Caco-2 (cell line): ENCODE measurements at regions of chr1 and their contacts with region 1.

Region 1: DNA sequence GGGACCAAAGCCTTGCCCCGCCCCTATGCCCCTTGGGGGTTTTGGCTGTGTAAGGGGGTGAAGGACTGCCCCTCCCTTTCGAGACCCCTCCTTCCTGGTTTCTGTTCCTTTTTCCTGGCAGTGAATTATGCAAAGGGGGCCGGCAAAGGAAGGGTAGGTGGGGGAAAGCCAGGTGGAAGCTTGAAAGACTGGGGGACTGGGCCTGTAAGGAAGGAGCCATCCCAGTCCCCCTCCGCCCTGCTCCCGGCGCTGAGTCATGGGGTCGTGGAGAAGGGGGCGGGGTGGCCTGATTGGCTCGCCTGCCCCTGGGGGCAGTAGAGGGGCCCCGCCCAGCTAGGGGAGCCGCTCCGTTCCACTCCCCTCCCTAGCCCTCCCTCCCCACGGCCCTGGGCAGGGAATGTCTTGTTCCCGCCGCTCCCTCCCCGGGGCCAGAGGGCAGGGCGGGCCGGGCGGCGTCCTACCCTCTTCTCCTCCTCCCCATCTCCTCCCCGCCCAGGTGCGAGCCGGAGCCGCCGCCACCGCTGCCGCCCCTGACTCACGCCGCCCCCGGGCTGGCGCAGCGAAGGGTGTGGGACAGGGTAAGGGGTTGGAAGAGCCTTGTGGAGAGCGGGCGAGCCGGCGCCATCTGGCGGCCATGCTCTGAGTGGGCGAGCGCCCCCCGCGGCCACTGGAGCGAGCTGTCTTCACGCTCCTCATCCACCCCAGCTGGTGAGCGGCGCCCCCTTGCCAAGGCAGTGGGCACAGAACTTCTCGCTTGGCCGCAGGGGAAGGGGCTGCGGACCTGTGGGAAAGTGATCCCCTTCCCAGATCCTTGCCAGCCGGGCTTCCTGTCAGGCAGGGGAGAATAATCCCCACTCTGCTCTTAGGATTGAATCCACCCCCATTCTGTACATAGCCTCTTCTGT is 14.7 kb downstream of the ZBTB7B start:
- DNase-seq: peak; percentile 97 to 98
- H3K4me3 ChIP-seq: peak overlapping the region; percentile 6; the same call in 1 of the 2 replicates
- H3K4me3 Mint-ChIP-seq: peak overlapping the region; percentile 56
- H3K27ac Mint-ChIP-seq: peak overlapping the region; percentile 76
- H3K4me1 ChIP-seq: peaks cover 20% of the 10 kb centered on the region
- H3K4me1 Mint-ChIP-seq: peaks cover 38% of the 10 kb centered on the region
- H3K27me3 ChIP-seq: no peaks in the 10 kb centered on the region
- H3K27me3 Mint-ChIP-seq: no peaks in the 10 kb centered on the region
- CTCF ChIP-seq: peak; percentile 99 to 100

Region 2: GRCh38 chr1:154961497-154962262 is 55.6 kb before region 1 on chr1 and contains the start of gene PYGO2:
- CTCF ChIA-PET with region 1: interaction called, 11 read pairs
- POLR2A ChIA-PET with region 1: no interaction called
- intact Hi-C with region 1: no loop called
- DNase-seq: peak; percentile 80 to 90
- H3K4me3 ChIP-seq: peak within 1 kb of the TSS; percentile 95
- H3K4me3 Mint-ChIP-seq: peak within 1 kb of the TSS; percentile 88
- H3K27ac Mint-ChIP-seq: peak within 1 kb of the TSS; percentile 81
- H3K4me1 ChIP-seq: peaks cover 12% of the 10 kb centered on the region
- H3K4me1 Mint-ChIP-seq: peaks cover 16% of the 10 kb centered on the region
- H3K27me3 ChIP-seq: no peaks in the 10 kb centered on the region
- H3K27me3 Mint-ChIP-seq: no peaks in the 10 kb centered on the region
- CTCF ChIP-seq: peak; percentile 23 to 55
- total RNA-seq, gene PYGO2: 34.1 and 34.9 TPM in 2 replicates

Region 3: DNA sequence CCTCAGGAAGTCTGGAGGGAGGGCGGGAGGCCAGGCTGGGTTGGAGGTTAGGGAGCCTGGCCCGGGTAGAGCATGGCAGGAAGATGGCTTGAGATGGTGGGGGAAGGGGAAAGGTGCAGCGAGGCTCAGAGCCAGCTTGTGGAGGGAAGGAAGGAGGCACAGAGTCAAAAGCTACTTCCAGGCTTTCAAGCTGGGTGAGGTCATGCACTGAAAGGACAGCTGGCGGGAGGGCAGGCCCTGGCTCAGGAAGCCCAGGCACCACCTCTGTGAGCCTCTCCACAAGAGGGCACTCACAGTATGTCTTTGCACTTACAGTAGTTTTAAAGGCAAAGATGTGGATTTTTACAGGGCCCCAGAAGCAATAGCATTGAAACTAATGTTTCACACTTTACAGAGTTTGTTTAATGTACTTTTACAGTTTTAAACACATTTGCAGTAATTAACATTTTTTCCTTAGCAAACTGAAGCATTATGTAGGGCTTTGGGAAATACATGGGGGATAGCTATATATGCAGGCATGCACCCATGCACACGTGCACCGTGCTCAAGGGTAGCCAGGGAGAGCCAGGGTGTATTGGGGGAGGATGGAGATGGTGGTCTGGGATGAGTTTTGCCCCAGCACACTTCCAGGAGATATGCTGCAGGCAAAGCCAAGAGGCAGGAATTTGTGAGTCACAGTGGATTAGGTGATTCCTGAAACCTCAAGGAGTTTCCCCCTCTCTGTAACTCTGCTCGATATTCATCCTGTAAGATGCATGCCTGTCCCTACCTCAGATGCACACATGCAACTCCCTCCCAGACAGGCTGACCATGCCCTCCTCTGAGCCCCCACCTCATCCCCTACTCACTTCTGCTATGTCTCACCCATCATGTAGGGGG is 27.8 kb after region 1 on chr1:
- CTCF ChIA-PET with region 1: interaction called, 12 read pairs
- POLR2A ChIA-PET with region 1: no interaction called
- intact Hi-C with region 1: loop called (anchors 2 kb)
- DNase-seq: peak; percentile 79 to 81
- H3K4me3 ChIP-seq: no peak overlapping the region
- H3K4me3 Mint-ChIP-seq: no peak overlapping the region
- H3K27ac Mint-ChIP-seq: no peak overlapping the region
- H3K4me1 ChIP-seq: peaks cover 18% of the 10 kb centered on the region
- H3K4me1 Mint-ChIP-seq: peaks cover 15% of the 10 kb centered on the region
- H3K27me3 ChIP-seq: no peaks in the 10 kb centered on the region
- H3K27me3 Mint-ChIP-seq: no peaks in the 10 kb centered on the region
- CTCF ChIP-seq: peak; percentile 73 to 84

Region 4: GRCh38 chr1:155050560-155051341 is 33.5 kb after region 1 on chr1 and contains the start of gene ADAM15:
- CTCF ChIA-PET with region 1: interaction called, 18 read pairs
- POLR2A ChIA-PET with region 1: interaction called, 5 read pairs
- intact Hi-C with region 1: loop called (anchors 2 kb)
- DNase-seq: peak; percentile 80 to 90
- H3K4me3 ChIP-seq: peak within 1 kb of the TSS; percentile 61
- H3K4me3 Mint-ChIP-seq: peak within 1 kb of the TSS; percentile 88
- H3K27ac Mint-ChIP-seq: peak within 1 kb of the TSS; percentile 86
- H3K4me1 ChIP-seq: peaks cover 20% of the 10 kb centered on the region
- H3K4me1 Mint-ChIP-seq: peaks cover 19% of the 10 kb centered on the region
- H3K27me3 ChIP-seq: no peaks in the 10 kb centered on the region
- H3K27me3 Mint-ChIP-seq: no peaks in the 10 kb centered on the region
- CTCF ChIP-seq: peak; percentile 86 to 90
- total RNA-seq, gene ADAM15: 44.0 and 48.2 TPM in 2 replicates

Region 5: DNA sequence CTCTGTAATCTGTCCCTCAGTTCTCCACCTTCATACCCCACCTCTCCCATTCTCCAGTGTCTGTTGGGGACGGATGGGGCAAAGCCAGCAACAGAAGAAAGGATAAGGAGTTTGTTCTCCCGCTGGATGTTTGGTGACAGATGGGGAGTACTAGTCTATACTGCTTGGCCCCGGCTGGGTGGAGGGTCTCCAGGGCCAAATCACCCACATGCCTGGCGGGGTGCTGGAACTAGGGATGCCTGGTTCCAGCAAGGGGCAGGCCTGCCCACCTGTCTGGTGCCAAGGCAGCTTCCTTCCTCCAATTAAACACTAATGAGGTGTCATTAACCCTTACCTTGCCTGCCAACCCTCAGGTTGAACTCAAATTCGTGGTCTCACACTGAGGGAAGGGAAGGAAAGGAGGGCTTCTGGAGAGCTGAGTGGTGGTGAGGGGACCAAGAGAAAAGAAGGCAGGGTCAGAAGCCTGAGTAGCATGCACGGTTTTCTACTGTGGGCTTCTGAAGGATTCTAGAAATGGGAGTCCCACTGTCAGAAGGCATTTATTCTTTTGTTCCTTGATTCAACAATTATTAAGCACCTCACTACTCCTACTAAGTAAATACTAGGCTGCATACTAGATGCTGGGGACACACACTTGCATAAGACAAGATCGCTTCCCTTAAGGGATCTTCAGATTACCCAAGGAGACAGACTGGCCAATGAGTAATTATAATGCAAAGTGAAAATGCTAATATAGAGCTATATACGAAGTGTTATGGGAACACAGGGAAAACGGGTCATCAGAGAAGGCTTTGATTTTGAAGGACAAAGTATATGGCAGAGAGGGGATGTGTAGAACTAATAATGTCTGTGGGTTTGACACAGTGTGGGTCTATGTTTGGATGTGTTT is 55.4 kb after region 1 on chr1:
- CTCF ChIA-PET with region 1: no interaction called
- POLR2A ChIA-PET with region 1: no interaction called
- intact Hi-C with region 1: no loop called
- DNase-seq: no peak
- H3K4me3 ChIP-seq: no peak overlapping the region
- H3K4me3 Mint-ChIP-seq: no peak overlapping the region
- H3K27ac Mint-ChIP-seq: no peak overlapping the region
- H3K4me1 ChIP-seq: peaks cover 26% of the 10 kb centered on the region
- H3K4me1 Mint-ChIP-seq: peaks cover 10% of the 10 kb centered on the region
- H3K27me3 ChIP-seq: no peaks in the 10 kb centered on the region
- H3K27me3 Mint-ChIP-seq: no peaks in the 10 kb centered on the region
- CTCF ChIP-seq: no peak